PC-3 (cell line): ENCODE measurements at regions of chr12 and their contacts with region 1.

Region 1: DNA sequence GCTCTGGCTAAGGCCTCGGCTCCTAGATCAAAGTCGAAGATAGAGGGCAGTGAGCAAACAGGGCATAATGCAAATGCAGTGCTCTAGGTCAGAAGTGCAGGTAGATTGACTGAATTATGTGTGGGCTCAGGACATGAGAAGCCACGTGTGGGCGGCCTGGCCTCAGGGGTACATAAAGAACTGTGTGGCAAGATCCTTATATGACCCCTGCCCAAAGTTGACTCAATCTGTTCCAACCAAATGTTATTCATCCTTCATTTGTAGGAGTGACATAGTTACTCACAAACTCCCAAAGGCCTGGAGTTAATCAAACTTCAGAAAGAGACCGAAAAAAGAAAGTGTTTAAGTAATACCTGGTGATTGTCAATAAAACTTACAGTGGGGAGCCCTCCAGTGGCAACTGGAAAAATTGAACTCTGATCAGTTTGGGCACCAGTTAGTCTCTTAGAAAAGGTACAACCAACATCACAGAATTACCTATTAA is 150.4 kb upstream of the FAR2 start:
- DNase-seq: peak; percentile 92
- ATAC-seq: peak; percentile 86
- H3K4me3 ChIP-seq: no peak overlapping the region
- H3K27ac ChIP-seq: no peak overlapping the region
- H3K4me1 ChIP-seq: no peaks in the 10 kb centered on the region
- H3K27me3 ChIP-seq: no peaks in the 10 kb centered on the region
- CTCF ChIP-seq: peak; percentile 100

Region 2: GRCh38 chr12:28497889-28498411 is 500.7 kb before region 1 on chr12:
- CTCF ChIA-PET with region 1: no interaction called
- POLR2A ChIA-PET with region 1: no interaction called
- intact Hi-C with region 1: loop called (anchors 10 kb)
- DNase-seq: peak; percentile 93
- ATAC-seq: peak; percentile 95
- H3K4me3 ChIP-seq: no peak overlapping the region; the same call in 1 of the 2 replicates
- H3K27ac ChIP-seq: peak overlapping the region; percentile 63
- H3K4me1 ChIP-seq: peaks cover 26% of the 10 kb centered on the region
- H3K27me3 ChIP-seq: no peaks in the 10 kb centered on the region
- CTCF ChIP-seq: no peak

Region 3: GRCh38 chr12:28652239-28652638 is 346.4 kb before region 1 on chr12:
- CTCF ChIA-PET with region 1: no interaction called
- POLR2A ChIA-PET with region 1: interaction called, 6 read pairs
- intact Hi-C with region 1: loop called (anchors 5 kb)
- DNase-seq: peak; percentile 16
- ATAC-seq: no peak
- H3K4me3 ChIP-seq: peak overlapping the region; percentile 19
- H3K27ac ChIP-seq: no peak overlapping the region
- H3K4me1 ChIP-seq: peaks cover 3% of the 10 kb centered on the region; the same call in 1 of the 2 replicates
- H3K27me3 ChIP-seq: no peaks in the 10 kb centered on the region
- CTCF ChIP-seq: no peak

Region 4: DNA sequence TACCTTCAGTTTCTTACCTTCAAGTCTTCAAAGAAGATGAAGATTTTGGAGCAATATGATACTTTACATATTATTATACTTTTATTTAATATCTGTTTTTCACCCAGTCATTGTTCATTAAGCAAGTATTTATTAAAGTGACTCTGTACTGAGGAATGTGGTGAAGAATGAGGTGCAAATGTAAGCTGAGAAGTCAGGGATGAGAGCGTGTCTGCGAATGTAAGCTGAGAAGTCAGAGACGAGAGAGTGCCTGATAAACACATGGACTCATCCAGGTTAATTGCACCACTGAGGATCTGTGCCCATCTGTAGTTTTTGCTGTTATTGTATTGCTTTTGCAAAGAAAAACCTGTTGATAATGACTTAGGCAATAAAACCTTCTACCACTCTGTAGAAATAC is 61.5 kb before region 1 on chr12:
- CTCF ChIA-PET with region 1: no interaction called
- POLR2A ChIA-PET with region 1: no interaction called
- intact Hi-C with region 1: loop called (anchors 2 kb)
- DNase-seq: peak; percentile 76
- ATAC-seq: peak; percentile 58
- H3K4me3 ChIP-seq: no peak overlapping the region
- H3K27ac ChIP-seq: no peak overlapping the region
- H3K4me1 ChIP-seq: peaks cover 22% of the 10 kb centered on the region
- H3K27me3 ChIP-seq: no peaks in the 10 kb centered on the region
- CTCF ChIP-seq: no peak

Region 5: GRCh38 chr12:29030006-29030405 is 31.3 kb after region 1 on chr12:
- CTCF ChIA-PET with region 1: no interaction called
- POLR2A ChIA-PET with region 1: no interaction called
- intact Hi-C with region 1: no loop called
- DNase-seq: peak; percentile 37
- ATAC-seq: no peak
- H3K4me3 ChIP-seq: no peak overlapping the region
- H3K27ac ChIP-seq: no peak overlapping the region
- H3K4me1 ChIP-seq: peaks cover 13% of the 10 kb centered on the region
- H3K27me3 ChIP-seq: no peaks in the 10 kb centered on the region
- CTCF ChIP-seq: no peak

Region 6: DNA sequence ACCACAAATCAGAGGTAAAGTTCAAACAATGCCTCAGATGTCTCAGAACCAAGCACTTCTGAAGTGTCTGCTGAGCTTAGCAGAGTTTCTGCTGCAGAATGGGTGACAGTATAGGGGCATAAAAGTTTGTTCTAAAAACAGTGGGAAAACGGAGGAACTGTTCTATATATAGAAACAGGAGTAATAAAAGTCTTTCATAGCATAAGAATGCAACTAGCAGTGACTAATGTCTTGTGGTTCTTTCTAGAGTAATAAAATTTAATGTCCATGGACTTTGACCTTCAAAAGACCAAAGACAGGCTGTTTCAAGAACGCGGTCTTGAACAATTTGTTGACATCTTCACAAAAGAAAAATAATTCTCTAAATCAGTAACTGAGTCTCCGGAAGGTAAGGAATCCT is 42.9 kb after region 1 on chr12:
- CTCF ChIA-PET with region 1: no interaction called
- POLR2A ChIA-PET with region 1: no interaction called
- intact Hi-C with region 1: loop called (anchors 2 kb)
- DNase-seq: peak; percentile 99
- ATAC-seq: peak; percentile 85
- H3K4me3 ChIP-seq: peak overlapping the region; percentile 34; the same call in 1 of the 2 replicates
- H3K27ac ChIP-seq: peak overlapping the region; percentile 88
- H3K4me1 ChIP-seq: peaks cover 49% of the 10 kb centered on the region
- H3K27me3 ChIP-seq: no peaks in the 10 kb centered on the region
- CTCF ChIP-seq: no peak

Region 7: GRCh38 chr12:29073628-29074239 is 75.1 kb after region 1 on chr12:
- CTCF ChIA-PET with region 1: interaction called, 6 read pairs
- POLR2A ChIA-PET with region 1: no interaction called
- intact Hi-C with region 1: loop called (anchors 2 kb)
- DNase-seq: peak; percentile 92
- ATAC-seq: peak; percentile 58
- H3K4me3 ChIP-seq: no peak overlapping the region
- H3K27ac ChIP-seq: peak overlapping the region; percentile 43
- H3K4me1 ChIP-seq: peaks cover 31% of the 10 kb centered on the region
- H3K27me3 ChIP-seq: no peaks in the 10 kb centered on the region
- CTCF ChIP-seq: peak; percentile 99